Naive thymus-derived CD8-positive, alpha-beta T cell (primary cell): ENCODE measurements at regions of chr10 and their contacts with region 1.

Region 1: GRCh38 chr10:79358783-79359182 is 11.5 kb downstream of the PPIF start:
- DNase-seq: no peak
- ATAC-seq: no peak
- H3K4me3 Mint-ChIP-seq: no peak overlapping the region
- H3K27ac Mint-ChIP-seq: no peak overlapping the region
- H3K4me1 Mint-ChIP-seq: peaks cover 10 to 28% (median 14%) of the 10 kb centered on the region in 4 donors
- H3K27me3 Mint-ChIP-seq: no peaks in the 10 kb centered on the region

Region 2: DNA sequence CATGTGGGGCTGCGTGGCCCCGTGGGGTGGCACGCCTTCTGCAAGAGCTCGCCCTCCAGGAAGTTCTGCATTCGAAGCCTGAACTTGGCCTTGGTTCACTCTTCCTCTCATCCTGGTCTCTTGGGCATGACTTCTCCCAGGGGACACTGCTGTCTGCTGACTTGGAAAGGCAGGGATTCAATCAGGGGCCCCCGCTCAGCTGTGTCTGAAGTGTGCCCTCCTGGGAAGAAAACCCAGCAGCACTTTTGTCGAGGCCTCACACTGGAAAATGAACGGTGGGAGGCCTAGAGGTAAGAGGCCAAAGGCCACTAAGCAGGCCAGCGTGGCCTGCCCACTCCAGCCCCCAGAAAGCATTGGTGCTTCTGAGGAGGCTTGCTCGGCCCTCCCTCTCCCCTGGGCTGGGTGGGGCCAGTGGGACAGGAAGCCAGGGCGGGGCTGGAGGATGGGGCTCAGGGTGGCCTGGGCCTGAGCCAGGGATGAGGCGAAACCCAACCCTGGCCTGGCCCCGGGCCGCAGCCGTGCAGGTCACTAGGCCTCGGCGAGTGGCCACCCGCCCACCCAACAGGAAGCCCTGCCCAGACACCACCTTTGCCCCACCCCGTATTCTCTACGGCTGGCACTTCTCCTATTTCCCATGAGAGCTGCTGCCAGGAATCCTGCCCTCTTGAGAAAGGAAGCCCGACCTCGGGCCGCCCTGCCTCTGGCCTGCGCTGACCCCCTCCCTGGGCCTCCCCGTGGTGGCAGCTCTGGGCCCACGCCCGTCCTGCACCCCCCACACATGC is 208.9 kb before region 1 on chr10:
- POLR2A ChIA-PET with region 1: no interaction called
- DNase-seq: peak in 7 of 10 donors; percentile 18 to 71 (median 37)
- ATAC-seq: peak; percentile 75 to 78
- H3K4me3 Mint-ChIP-seq: peak overlapping the region; percentile 12 to 69 (median 54)
- H3K27ac Mint-ChIP-seq: peak overlapping the region in 9 of 10 donors; percentile 78 to 89 (median 84)
- H3K4me1 Mint-ChIP-seq: peaks cover 28 to 69% (median 65%) of the 10 kb centered on the region in 4 donors
- H3K27me3 Mint-ChIP-seq: no peaks in the 10 kb centered on the region

Region 3: GRCh38 chr10:79328737-79329504 is 29.9 kb before region 1 on chr10:
- POLR2A ChIA-PET with region 1: interaction called, 10 read pairs
- DNase-seq: no peak
- ATAC-seq: no peak
- H3K4me3 Mint-ChIP-seq: no peak overlapping the region
- H3K27ac Mint-ChIP-seq: peak overlapping the region in 1 of 10 donors; percentile 61
- H3K4me1 Mint-ChIP-seq: peaks cover 7 to 24% (median 11%) of the 10 kb centered on the region in 4 donors
- H3K27me3 Mint-ChIP-seq: no peaks in the 10 kb centered on the region